Heart right ventricle (tissue), 16 donors: ENCODE measurements at regions of chr15 and their contacts with region 1.

Region 1: GRCh38 chr15:66126031-66126441 is 127.5 kb downstream of the MEGF11 start:
- DNase-seq: no peak
- ATAC-seq: no peak
- H3K4me3 ChIP-seq: no peak overlapping the region
- H3K27ac ChIP-seq: no peak overlapping the region
- H3K4me1 ChIP-seq: no peaks in the 10 kb centered on the region
- H3K27me3 ChIP-seq: peaks cover 0 to 63% (median 54%) of the 10 kb centered on the region in 7 donors
- CTCF ChIP-seq: no peak

Region 2: GRCh38 chr15:66287461-66288057 is 161.5 kb after region 1 on chr15:
- intact Hi-C with region 1: loop called in 1 of 10 experiments (anchors 10 kb)
- DNase-seq: no peak
- ATAC-seq: no peak
- H3K4me3 ChIP-seq: no peak overlapping the region
- H3K27ac ChIP-seq: no peak overlapping the region
- H3K4me1 ChIP-seq: peaks cover 0 to 13% (median 5%) of the 10 kb centered on the region in 9 donors
- H3K27me3 ChIP-seq: no peaks in the 10 kb centered on the region
- CTCF ChIP-seq: peak; percentile 44 to 75 (median 66)